Activated naive CD4-positive, alpha-beta T cell treated with anti-CD3 and anti-CD28 coated beads, Interleukin-2, amount 10 ng/mL, durations not matched to agents 7 days and 5 days (primary cell): ENCODE measurements at regions of chr6 and their contacts with region 1.

Region 1: GRCh38 chr6:70310063-70310694 is 7.3 kb upstream of the COL9A1 start:
- DNase-seq: no peak
- H3K4me3 Mint-ChIP-seq: no peak overlapping the region
- H3K27ac Mint-ChIP-seq: no peak overlapping the region
- H3K4me1 Mint-ChIP-seq: no peaks in the 10 kb centered on the region
- H3K27me3 Mint-ChIP-seq: peaks cover 4% of the 10 kb centered on the region

Region 2: GRCh38 chr6:70369332-70369950 is 59.3 kb after region 1 on chr6:
- CTCF ChIA-PET with region 1: interaction called, 39 read pairs
- DNase-seq: peak; percentile 76
- H3K4me3 Mint-ChIP-seq: no peak overlapping the region
- H3K27ac Mint-ChIP-seq: no peak overlapping the region
- H3K4me1 Mint-ChIP-seq: no peaks in the 10 kb centered on the region
- H3K27me3 Mint-ChIP-seq: peaks cover 7% of the 10 kb centered on the region

Region 3: GRCh38 chr6:70955441-70956190 is 645.4 kb after region 1 on chr6:
- CTCF ChIA-PET with region 1: interaction called, 10 read pairs
- DNase-seq: peak; percentile 90
- H3K4me3 Mint-ChIP-seq: peak overlapping the region; percentile 66
- H3K27ac Mint-ChIP-seq: peak overlapping the region; percentile 42
- H3K4me1 Mint-ChIP-seq: peaks cover 22% of the 10 kb centered on the region
- H3K27me3 Mint-ChIP-seq: peaks cover 74% of the 10 kb centered on the region